ENCODE measurements at regions of chr17 and their contacts with region 1.

Region 1: DNA sequence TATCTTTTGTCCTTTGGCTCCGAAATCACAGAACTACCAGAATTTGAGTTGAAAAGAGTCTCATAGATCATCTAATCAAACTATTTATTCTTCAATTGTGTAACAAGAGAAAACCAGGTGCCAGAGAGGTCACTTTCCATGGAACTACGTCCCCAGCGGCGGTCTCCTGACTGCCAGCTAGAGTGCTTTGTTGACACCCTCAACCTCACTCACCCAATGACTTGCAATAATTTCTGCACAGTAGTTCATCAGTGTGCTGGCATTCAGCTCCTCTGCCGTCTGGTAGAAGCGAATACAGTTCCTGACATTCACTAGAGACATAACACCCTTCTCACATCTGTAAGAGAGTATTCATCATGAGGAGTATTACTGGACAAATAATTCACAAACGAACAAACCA is 54.2 kb downstream of the ANKFY1 start:
- DNase-seq: no peak
- H3K4me3 ChIP-seq: no peak overlapping the region
- H3K27ac ChIP-seq: no peak overlapping the region
- H3K4me1 ChIP-seq: peaks cover 5 to 15% of the 10 kb centered on the region in 2 donors
- H3K27me3 ChIP-seq: no peaks in the 10 kb centered on the region
- CTCF ChIP-seq: no peak
- POLR2A ChIP-seq: no peak

Region 2: GRCh38 chr17:4143563-4144421 is 65.8 kb before region 1 on chr17:
- intact Hi-C with region 1: no loop called
- DNase-seq: peak; percentile 90 to 97 (median 92)
- H3K4me3 ChIP-seq: peak overlapping the region; percentile 49 to 98 (median 76)
- H3K27ac ChIP-seq: peak overlapping the region; percentile 98 to 100 (median 99)
- H3K4me1 ChIP-seq: peaks cover 17 to 33% of the 10 kb centered on the region in 2 donors
- H3K27me3 ChIP-seq: no peaks in the 10 kb centered on the region
- CTCF ChIP-seq: peak in 2 of 6 experiments; percentile 12 to 30
- POLR2A ChIP-seq: peak; percentile 51 to 77

Region 3: GRCh38 chr17:4407851-4408250 is 198.2 kb after region 1 on chr17:
- intact Hi-C with region 1: loop called (anchors 5 to 10 kb)
- DNase-seq: peak in 1 of 7 donors; percentile 2
- H3K4me3 ChIP-seq: no peak overlapping the region
- H3K27ac ChIP-seq: no peak overlapping the region
- H3K4me1 ChIP-seq: no peaks in the 10 kb centered on the region
- H3K27me3 ChIP-seq: no peaks in the 10 kb centered on the region
- CTCF ChIP-seq: no peak
- POLR2A ChIP-seq: no peak